ENCODE measurements at regions of chr11 and their contacts with region 1.

Region 1: GRCh38 chr11:114036156-114036811 is 23.2 kb upstream of the ZBTB16 start:
- DNase-seq: peak; percentile 41
- ATAC-seq: peak; percentile 93
- H3K4me3 ChIP-seq: peak overlapping the region in 1 of 2 experiments; percentile 36; a peak in 2 of 4 replicates
- H3K27ac ChIP-seq: no peak overlapping the region
- H3K4me1 ChIP-seq: peaks cover 9 to 14% of the 10 kb centered on the region in 2 experiments; a peak in 3 of 4 replicates
- H3K27me3 ChIP-seq: no peaks in the 10 kb centered on the region
- CTCF ChIP-seq: peak; percentile 74 to 83 (median 74)
- POLR2A ChIP-seq: no peak
- RAD21 ChIP-seq: peak; percentile 76

Region 2: GRCh38 chr11:114075891-114076441 is 39.7 kb after region 1 on chr11:
- CTCF ChIA-PET with region 1: no interaction called
- POLR2A ChIA-PET with region 1: no interaction called
- RAD21 ChIA-PET with region 1: no interaction called
- intact Hi-C with region 1: loop called (anchors 2 kb)
- DNase-seq: peak; percentile 6
- ATAC-seq: peak; percentile 89
- H3K4me3 ChIP-seq: no peak overlapping the region
- H3K27ac ChIP-seq: no peak overlapping the region
- H3K4me1 ChIP-seq: no peaks in the 10 kb centered on the region
- H3K27me3 ChIP-seq: peaks cover 31% of the 10 kb centered on the region
- CTCF ChIP-seq: peak; percentile 10 to 78 (median 66); a peak in 5 of 6 replicates
- POLR2A ChIP-seq: no peak
- RAD21 ChIP-seq: peak; percentile 29; the same call in 1 of the 2 replicates

Region 3: GRCh38 chr11:114159802-114160632 is 123.7 kb after region 1 on chr11:
- CTCF ChIA-PET with region 1: no interaction called
- POLR2A ChIA-PET with region 1: no interaction called
- RAD21 ChIA-PET with region 1: no interaction called
- intact Hi-C with region 1: loop called (anchors 5 kb)
- DNase-seq: peak; percentile 68
- ATAC-seq: peak; percentile 85
- H3K4me3 ChIP-seq: peak overlapping the region; percentile 5 to 8; a peak in 1 of 4 replicates
- H3K27ac ChIP-seq: no peak overlapping the region
- H3K4me1 ChIP-seq: peaks cover 17 to 21% of the 10 kb centered on the region in 2 experiments
- H3K27me3 ChIP-seq: peaks cover 71% of the 10 kb centered on the region
- CTCF ChIP-seq: no peak
- POLR2A ChIP-seq: no peak
- RAD21 ChIP-seq: 0 out of 2 replicates have a peak, but pooled peaks have one; percentile 13

Region 4: DNA sequence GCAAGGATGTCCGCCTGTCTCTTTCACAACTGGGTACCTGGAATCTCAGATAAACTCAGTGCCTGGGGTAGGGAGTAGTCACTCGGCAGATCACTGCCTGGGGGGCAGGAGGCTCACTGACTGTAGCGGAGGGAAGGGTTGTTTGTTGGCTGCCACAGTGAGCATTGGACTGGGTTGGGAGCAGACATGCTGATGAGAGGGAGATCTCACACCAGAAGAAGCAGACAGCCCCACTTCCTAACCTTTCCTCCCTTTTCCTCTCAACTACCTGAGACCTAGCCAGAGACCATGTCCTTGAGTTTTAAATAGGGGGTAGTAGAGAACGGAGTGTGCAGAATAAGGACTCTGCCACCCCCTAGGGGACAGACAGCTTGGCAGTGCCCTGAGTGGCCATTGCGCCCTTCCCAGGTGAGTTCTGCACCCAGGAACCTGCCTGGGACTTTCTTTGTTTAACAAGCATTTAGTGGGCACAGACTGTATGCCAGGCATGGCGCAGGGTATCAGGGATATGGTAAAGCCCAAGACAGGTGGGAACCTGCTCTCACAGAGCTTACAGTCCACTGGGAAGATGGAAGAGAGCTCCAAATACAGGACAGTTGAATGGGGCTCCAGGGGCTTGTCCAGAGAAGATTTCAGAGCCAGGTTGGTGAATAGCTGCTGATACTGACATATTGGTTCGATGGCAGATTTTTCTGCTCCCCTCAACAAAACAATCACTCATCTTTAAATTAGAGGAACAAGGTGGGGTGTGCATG is 144.2 kb after region 1 on chr11:
- CTCF ChIA-PET with region 1: interaction called, 3 read pairs
- POLR2A ChIA-PET with region 1: no interaction called
- RAD21 ChIA-PET with region 1: no interaction called
- intact Hi-C with region 1: loop called (anchors 1 kb)
- DNase-seq: no peak
- ATAC-seq: peak; percentile 94
- H3K4me3 ChIP-seq: no peak overlapping the region
- H3K27ac ChIP-seq: no peak overlapping the region
- H3K4me1 ChIP-seq: no peaks in the 10 kb centered on the region
- H3K27me3 ChIP-seq: peaks cover 55% of the 10 kb centered on the region
- CTCF ChIP-seq: peak; percentile 63 to 72 (median 71)
- POLR2A ChIP-seq: no peak
- RAD21 ChIP-seq: peak; percentile 81